ENCODE measurements at regions of chr12 and their contacts with region 1.

Region 1: GRCh38 chr12:6182116-6182898 is 17.9 kb upstream of the CD9 start:
- DNase-seq: peak; percentile 92
- H3K4me3 Mint-ChIP-seq: peak overlapping the region; percentile 36
- H3K27ac Mint-ChIP-seq: no peak overlapping the region
- H3K4me1 Mint-ChIP-seq: peaks cover 19% of the 10 kb centered on the region
- H3K27me3 Mint-ChIP-seq: no peaks in the 10 kb centered on the region
- CTCF ChIP-seq: no peak

Region 2: DNA sequence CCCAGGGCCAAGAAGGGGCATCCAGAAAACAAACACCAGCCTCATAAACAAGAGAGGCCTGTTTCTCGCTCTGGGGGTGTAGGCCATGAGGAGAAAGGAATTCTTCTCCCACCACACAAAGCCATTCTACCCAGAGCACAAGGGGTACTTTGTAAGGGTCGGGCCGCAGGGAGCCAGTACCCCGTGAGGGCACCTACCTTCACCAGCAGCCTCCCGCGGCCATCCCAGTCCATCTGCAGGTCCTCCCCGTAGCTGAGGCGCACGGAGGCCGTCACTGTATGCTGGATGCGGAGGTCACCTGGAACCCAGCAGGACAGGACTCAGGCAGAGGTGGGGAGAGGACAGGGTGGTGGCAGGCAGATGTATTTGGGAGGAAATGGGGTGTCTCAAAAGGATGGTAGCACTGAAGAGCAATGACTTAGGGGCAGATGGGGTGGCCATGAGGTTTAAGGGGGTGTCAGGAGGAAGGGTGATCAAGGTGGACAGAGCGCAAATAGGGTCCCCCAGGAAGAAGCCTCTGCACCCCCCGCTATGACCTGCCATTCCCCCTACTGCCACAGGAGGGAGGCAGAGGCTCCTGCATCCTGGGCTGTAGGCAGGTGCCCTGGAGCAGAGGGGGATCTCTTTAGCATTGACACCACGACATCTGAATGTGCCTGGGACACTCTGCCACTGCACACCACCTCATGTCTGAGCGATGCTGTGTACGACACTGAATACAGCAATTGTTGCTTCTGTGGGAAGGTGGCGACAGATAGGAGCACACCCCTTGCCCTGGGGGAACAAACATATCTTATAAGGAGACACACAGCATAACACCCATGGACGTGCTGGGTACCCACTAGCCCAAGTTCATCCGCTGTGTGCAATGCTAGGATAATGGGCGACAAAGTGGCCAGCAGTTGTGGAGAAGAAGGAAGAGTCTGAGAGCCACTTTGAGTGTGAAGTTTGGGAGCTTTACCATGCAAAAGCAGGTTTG is 119.3 kb before region 1 on chr12:
- CTCF ChIA-PET with region 1: interaction called, 6 read pairs
- POLR2A ChIA-PET with region 1: no interaction called
- intact Hi-C with region 1: loop called (anchors 5 kb)
- DNase-seq: peak; percentile 55
- H3K4me3 Mint-ChIP-seq: no peak overlapping the region
- H3K27ac Mint-ChIP-seq: no peak overlapping the region
- H3K4me1 Mint-ChIP-seq: no peaks in the 10 kb centered on the region
- H3K27me3 Mint-ChIP-seq: no peaks in the 10 kb centered on the region
- CTCF ChIP-seq: peak; percentile 98

Region 3: DNA sequence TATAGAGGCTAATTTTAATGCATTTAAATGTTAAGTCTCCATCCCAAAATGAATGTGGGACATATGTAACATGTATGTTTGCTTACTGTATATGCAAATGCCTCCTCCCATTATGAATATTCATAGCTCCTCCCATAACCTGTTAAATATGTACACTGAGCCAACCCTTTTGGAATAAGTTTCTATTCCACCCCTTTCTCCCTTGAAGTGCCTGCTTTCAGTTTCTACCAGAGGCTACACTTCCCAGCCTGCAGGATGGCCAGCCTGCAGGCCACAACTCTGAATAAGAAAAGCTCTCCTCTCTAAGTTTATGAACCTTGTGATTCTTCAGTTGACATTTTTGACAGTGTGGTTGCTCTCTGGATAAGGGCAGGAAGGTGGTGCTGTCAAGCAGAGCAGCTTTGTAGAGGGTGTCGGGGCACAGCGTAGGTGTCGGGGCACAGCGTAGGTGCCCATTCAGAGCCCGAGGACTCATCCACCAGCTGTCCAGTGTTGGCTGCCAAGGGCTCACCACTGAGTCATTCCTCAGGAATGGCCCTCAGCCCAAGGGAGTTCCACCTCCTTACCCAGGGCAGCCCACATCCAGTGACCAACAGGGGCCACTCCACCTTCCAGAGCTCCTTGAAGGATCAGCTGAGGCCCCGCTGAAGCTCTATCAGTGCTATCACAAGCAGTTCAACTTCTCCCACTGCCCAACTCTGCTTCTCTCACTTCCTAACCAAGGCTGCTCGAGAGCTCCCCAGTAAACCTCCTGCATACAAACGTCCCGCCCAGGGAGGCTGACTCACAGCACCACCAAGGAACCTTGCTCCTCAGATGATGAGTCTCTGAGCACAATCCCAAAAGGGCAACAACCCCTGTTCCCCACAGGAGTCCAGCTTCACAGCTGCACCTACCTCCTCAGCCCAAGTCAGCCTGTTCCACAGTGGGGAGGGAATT is 89.3 kb before region 1 on chr12:
- CTCF ChIA-PET with region 1: interaction called, 3 read pairs
- POLR2A ChIA-PET with region 1: interaction called, 7 read pairs
- intact Hi-C with region 1: loop called (anchors 1 kb)
- DNase-seq: peak; percentile 94
- H3K4me3 Mint-ChIP-seq: peak overlapping the region; percentile 54
- H3K27ac Mint-ChIP-seq: peak overlapping the region; percentile 77
- H3K4me1 Mint-ChIP-seq: peaks cover 33% of the 10 kb centered on the region
- H3K27me3 Mint-ChIP-seq: no peaks in the 10 kb centered on the region
- CTCF ChIP-seq: no peak